ENCODE measurements at regions of chr11 and their contacts with region 1.

Region 1: GRCh38 chr11:117300283-117300663 is 9.1 kb downstream of the BACE1-AS start:
- DNase-seq: peak; percentile 52
- ATAC-seq: peak; percentile 69
- H3K4me3 ChIP-seq: peak overlapping the region; percentile 62 to 78 (median 65)
- H3K27ac ChIP-seq: peak overlapping the region; percentile 92
- H3K4me1 ChIP-seq: peaks cover 72% of the 10 kb centered on the region
- H3K27me3 ChIP-seq: no peaks in the 10 kb centered on the region
- CTCF ChIP-seq: no peak
- EP300 ChIP-seq: no peak
- POLR2A ChIP-seq: no peak
- RAD21 ChIP-seq: no peak

Region 2: GRCh38 chr11:117171404-117172061 is 128.7 kb before region 1 on chr11:
- CTCF ChIA-PET with region 1: no interaction called
- POLR2A ChIA-PET with region 1: no interaction called
- in situ Hi-C with region 1: no loop called
- intact Hi-C with region 1: no loop called
- DNase-seq: no peak
- ATAC-seq: no peak
- H3K4me3 ChIP-seq: no peak overlapping the region
- H3K27ac ChIP-seq: no peak overlapping the region
- H3K4me1 ChIP-seq: peaks cover 19% of the 10 kb centered on the region; the same call in 1 of the 2 replicates
- H3K27me3 ChIP-seq: no peaks in the 10 kb centered on the region
- CTCF ChIP-seq: no peak
- EP300 ChIP-seq: no peak
- POLR2A ChIP-seq: no peak
- RAD21 ChIP-seq: no peak

Region 3: DNA sequence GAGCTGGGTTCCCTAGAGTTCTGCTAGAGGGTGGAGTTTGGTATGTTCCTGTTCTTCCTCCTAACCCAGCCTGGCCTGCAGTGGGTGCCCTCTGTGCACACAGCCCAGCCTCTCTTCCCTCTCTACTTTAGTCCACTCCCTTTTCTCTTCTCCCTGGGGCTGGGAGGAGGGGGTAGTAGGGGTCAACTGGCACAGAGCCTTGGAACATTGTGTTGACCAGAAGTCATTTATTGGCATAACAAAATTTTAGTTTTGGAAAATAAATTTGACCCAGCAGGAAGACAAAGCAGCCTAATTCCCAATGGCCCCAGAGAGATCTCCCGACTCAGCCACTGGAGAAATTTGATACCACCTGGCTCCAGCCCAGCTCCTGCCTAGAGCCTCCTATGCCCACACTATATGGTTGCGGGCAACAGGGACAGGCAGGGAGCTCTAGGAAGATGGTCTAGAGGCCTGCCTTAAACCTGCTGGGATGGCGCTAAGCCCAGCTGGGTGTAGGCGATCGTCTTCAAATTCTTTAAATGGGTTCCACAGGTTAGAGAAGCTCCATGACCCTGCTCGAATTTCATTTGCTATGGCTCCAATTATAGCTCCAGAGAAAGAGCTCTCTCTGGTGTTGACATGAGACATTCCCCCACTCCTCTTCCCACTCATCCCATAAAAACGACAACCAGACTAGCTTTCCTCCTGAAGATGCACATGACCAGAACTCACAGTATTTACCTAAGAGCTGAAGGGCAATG is 78.3 kb before region 1 on chr11:
- CTCF ChIA-PET with region 1: no interaction called
- POLR2A ChIA-PET with region 1: no interaction called
- in situ Hi-C with region 1: no loop called
- intact Hi-C with region 1: no loop called
- DNase-seq: no peak
- ATAC-seq: no peak
- H3K4me3 ChIP-seq: no peak overlapping the region
- H3K27ac ChIP-seq: no peak overlapping the region
- H3K4me1 ChIP-seq: peaks cover 16% of the 10 kb centered on the region
- H3K27me3 ChIP-seq: no peaks in the 10 kb centered on the region
- CTCF ChIP-seq: no peak
- EP300 ChIP-seq: no peak
- POLR2A ChIP-seq: no peak
- RAD21 ChIP-seq: no peak

Region 4: DNA sequence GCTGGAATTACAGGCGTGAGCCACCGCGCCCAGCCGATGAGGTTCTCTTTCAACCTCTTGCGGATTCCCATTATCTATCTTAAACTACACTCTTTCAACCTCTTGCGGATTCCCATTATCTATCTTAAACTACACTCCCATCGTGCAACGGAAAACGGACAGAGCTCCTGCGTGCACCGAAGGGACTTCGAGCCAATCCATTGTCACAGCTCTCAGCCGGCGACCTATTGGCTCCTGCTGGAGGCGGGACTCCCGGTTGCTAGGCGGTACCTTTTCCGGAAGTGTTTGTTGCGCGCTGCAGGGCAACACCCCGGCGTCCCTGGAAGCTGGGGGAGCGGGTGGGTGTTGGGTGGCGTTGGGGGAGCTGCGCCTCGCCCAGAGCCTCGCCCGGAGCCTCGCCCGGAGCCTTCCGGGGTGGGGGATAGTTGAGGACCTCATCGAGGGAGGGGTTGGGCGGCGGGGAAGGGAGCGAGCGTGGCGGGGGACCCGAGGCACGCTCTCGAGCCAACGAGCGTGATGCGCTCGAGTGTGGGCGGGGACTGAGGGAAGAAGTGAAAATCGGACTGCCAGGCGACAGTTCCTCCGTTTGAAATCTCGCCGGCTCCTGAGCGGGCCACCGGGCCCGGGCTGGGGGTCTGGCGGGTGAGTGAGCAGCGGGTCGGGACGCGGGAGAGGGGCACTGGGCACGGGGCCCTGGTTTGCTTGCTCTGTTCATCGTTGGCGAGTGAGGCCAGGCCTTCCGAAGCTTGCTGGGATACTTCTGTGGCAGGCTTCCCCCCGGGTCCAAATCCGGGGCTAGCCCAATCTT is 27.5 kb after region 1 on chr11 and contains the start of gene CEP164:
- CTCF ChIA-PET with region 1: no interaction called
- POLR2A ChIA-PET with region 1: interaction called, 33 read pairs
- in situ Hi-C with region 1: no loop called
- intact Hi-C with region 1: no loop called
- DNase-seq: peak; percentile 93
- ATAC-seq: peak; percentile 98
- H3K4me3 ChIP-seq: peak within 1 kb of the TSS; percentile 78 to 86 (median 79)
- H3K27ac ChIP-seq: peak within 1 kb of the TSS; percentile 60
- H3K4me1 ChIP-seq: peaks cover 27% of the 10 kb centered on the region
- H3K27me3 ChIP-seq: no peaks in the 10 kb centered on the region; a peak in 1 of 5 replicates
- CTCF ChIP-seq: no peak
- EP300 ChIP-seq: no peak
- POLR2A ChIP-seq: peak; percentile 38 to 55
- RAD21 ChIP-seq: no peak
- total RNA-seq, gene CEP164: 9.6 and 15.2 TPM in 2 replicates

Region 5: DNA sequence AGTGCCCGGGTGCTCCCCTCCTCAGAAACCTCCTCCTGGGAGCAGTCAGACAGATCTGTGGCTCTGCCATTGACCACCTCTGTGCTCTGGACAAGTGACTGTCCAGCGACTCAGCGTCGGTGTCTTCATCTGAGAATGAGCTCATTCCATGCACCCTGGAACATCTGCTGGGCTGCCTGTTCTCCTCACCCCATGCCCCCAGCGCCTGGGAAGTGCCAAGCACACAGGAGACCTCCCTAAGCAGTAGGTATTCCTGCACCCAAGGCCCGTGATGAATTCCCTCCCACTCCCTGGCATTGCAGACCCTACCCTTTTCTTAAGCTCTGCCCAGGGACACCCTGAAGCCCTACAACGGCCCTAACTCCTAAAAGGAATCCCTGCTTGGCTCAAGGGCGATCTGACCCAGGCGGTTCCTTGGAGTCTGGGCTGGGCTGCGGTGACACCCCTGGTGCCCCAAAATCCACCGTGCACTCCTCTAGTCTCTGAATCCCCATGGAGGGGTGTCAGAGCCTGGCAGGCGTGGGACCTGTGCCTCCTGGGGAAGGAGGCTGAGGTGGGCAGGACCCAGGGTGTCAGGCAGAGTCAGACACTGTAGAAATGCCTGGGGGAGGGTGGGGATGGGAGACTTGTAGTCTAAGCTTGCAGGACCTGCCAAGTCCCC is 119.3 kb after region 1 on chr11:
- CTCF ChIA-PET with region 1: no interaction called
- POLR2A ChIA-PET with region 1: no interaction called
- in situ Hi-C with region 1: no loop called
- intact Hi-C with region 1: no loop called
- DNase-seq: no peak
- ATAC-seq: peak; percentile 60
- H3K4me3 ChIP-seq: peak overlapping the region in 2 of 3 experiments; percentile 2 to 52; a peak in 2 of 6 replicates
- H3K27ac ChIP-seq: no peak overlapping the region
- H3K4me1 ChIP-seq: peaks cover 36% of the 10 kb centered on the region
- H3K27me3 ChIP-seq: peaks cover 4 to 14% of the 10 kb centered on the region in 2 experiments; a peak in 2 of 5 replicates
- CTCF ChIP-seq: no peak
- EP300 ChIP-seq: no peak
- POLR2A ChIP-seq: no peak
- RAD21 ChIP-seq: no peak

Region 6: GRCh38 chr11:117468888-117469287 is 168.6 kb after region 1 on chr11:
- CTCF ChIA-PET with region 1: no interaction called
- POLR2A ChIA-PET with region 1: no interaction called
- in situ Hi-C with region 1: no loop called
- intact Hi-C with region 1: no loop called
- DNase-seq: no peak
- ATAC-seq: peak; percentile 50
- H3K4me3 ChIP-seq: no peak overlapping the region
- H3K27ac ChIP-seq: no peak overlapping the region
- H3K4me1 ChIP-seq: no peaks in the 10 kb centered on the region
- H3K27me3 ChIP-seq: peaks cover 0 to 12% of the 10 kb centered on the region in 2 experiments
- CTCF ChIP-seq: no peak
- EP300 ChIP-seq: no peak
- POLR2A ChIP-seq: no peak
- RAD21 ChIP-seq: no peak

Measured in HepG2 (cell line).